ENCODE measurements at regions of chr21 and their contacts with region 1.

Region 1: GRCh38 chr21:35366394-35367080 is 317.4 kb upstream of the RUNX1 start:
- DNase-seq: no peak
- ATAC-seq: peak; percentile 89 to 94 (median 92)
- H3K4me3 ChIP-seq: no peak overlapping the region
- H3K27ac ChIP-seq: peak overlapping the region; percentile 89
- H3K4me1 ChIP-seq: peaks cover 22% of the 10 kb centered on the region
- H3K27me3 ChIP-seq: no peaks in the 10 kb centered on the region
- CTCF ChIP-seq: no peak

Region 2: GRCh38 chr21:35217504-35218060 is 149.0 kb before region 1 on chr21:
- intact Hi-C with region 1: loop called in 1 of 2 experiments (anchors 10 kb)
- DNase-seq: no peak
- ATAC-seq: peak; percentile 88 to 95 (median 90)
- H3K4me3 ChIP-seq: no peak overlapping the region
- H3K27ac ChIP-seq: peak overlapping the region; percentile 75
- H3K4me1 ChIP-seq: peaks cover 36% of the 10 kb centered on the region
- H3K27me3 ChIP-seq: no peaks in the 10 kb centered on the region
- CTCF ChIP-seq: no peak

Region 3: GRCh38 chr21:35265170-35265877 is 101.2 kb before region 1 on chr21:
- intact Hi-C with region 1: loop called in 1 of 2 experiments (anchors 10 kb)
- DNase-seq: no peak
- ATAC-seq: peak in 3 of 4 donors; percentile 38 to 54 (median 48)
- H3K4me3 ChIP-seq: no peak overlapping the region
- H3K27ac ChIP-seq: no peak overlapping the region
- H3K4me1 ChIP-seq: no peaks in the 10 kb centered on the region
- H3K27me3 ChIP-seq: no peaks in the 10 kb centered on the region
- CTCF ChIP-seq: no peak

Region 4: DNA sequence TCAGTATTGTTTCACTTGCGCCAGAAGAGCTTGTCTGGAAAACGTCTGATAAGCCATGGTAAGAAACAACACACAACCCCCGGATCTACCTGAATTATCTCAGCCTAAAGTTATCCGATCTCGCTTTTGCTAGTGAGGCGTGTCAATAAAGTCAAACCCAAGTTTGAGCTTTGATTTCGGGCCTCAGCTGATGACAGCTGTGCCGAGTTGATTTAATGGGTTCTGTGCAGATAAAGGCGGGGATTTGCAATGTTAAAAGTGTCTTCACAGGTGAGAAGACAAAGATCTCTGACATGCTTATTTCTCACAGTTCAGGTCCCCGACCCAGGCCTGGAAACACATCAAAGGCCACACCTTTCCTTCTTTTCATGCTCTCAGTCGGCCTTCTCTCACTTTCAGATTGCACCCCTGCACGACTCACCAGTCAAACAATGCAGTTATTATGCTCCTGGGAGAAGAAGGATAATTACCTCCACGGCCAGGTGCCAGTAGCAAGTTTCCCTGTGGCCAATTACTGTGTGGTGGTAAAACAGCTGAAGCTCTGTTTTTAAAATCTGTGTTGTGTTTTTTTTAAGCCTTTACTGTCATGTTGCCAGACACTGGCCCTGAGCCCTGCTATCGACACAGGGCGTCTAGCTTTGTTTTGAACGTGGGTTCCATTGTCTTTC is 72.2 kb before region 1 on chr21:
- intact Hi-C with region 1: no loop called
- DNase-seq: no peak
- ATAC-seq: no peak
- H3K4me3 ChIP-seq: no peak overlapping the region
- H3K27ac ChIP-seq: no peak overlapping the region
- H3K4me1 ChIP-seq: no peaks in the 10 kb centered on the region
- H3K27me3 ChIP-seq: no peaks in the 10 kb centered on the region
- CTCF ChIP-seq: no peak